CD4-positive, alpha-beta memory T cell (primary cell): ENCODE measurements at regions of chr16 and their contacts with region 1.

Region 1: DNA sequence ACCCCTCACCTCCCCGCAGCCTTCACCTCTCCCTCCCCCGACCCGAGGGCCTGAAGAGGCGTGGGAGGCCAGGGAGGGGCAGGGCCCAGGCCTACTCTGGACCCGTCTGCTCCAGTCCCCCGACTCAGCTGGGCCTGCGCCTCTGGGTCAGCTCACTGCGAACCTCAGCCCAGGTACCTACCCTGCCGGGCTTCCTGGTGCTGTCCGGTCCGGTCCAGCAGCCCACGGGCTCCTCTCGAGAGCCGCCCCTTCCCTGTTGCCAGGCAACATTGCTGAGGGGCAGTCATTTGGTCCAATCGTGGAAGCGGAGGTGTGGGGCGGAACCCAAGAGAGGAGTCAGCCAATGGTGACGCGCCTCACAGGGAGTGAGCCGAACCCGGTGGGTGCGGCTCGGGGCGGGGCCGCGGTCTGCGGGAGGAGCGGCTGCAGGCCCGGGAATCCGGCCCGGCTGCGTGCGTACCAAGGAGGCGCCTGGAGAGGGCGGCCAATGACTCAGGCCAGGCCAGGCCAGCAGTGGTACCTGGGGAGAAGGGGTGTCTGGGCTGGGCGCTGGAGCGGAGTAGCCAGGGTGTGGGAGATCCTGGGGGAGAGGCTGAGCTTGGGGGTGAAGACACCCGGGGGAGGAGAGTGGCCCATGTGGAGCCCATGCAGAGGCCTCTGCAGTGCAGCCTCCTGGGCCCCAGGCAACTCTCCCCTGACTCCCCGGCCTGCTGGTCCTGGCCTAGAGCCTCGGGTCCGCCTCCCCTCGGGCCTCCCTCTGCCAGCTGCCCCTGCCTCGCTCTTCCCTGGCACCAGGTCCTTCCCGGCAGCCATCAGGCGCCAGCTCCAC is at the start of gene MEAK7:
- DNase-seq: peak; percentile 95 to 98 (median 96)
- H3K4me3 ChIP-seq: peak within 1 kb of the TSS; percentile 84 to 85
- H3K4me3 Mint-ChIP-seq: peak within 1 kb of the TSS; percentile 87 to 94 (median 91)
- H3K27ac ChIP-seq: peak within 1 kb of the TSS; percentile 74
- H3K27ac Mint-ChIP-seq: peak within 1 kb of the TSS; percentile 80 to 92 (median 88)
- H3K4me1 ChIP-seq: peaks cover 55% of the 10 kb centered on the region
- H3K4me1 Mint-ChIP-seq: peaks cover 33 to 56% (median 44%) of the 10 kb centered on the region in 4 donors
- H3K27me3 ChIP-seq: no peaks in the 10 kb centered on the region
- H3K27me3 Mint-ChIP-seq: no peaks in the 10 kb centered on the region
- total RNA-seq, gene MEAK7: 13.6 to 16.8 TPM

Region 2: GRCh38 chr16:84084570-84085270 is 419.9 kb before region 1 on chr16:
- CTCF ChIA-PET with region 1: no interaction called
- POLR2A ChIA-PET with region 1: no interaction called
- intact Hi-C with region 1: loop called (anchors 5 kb)
- DNase-seq: peak; percentile 64 to 76 (median 67)
- H3K4me3 ChIP-seq: no peak overlapping the region
- H3K4me3 Mint-ChIP-seq: peak overlapping the region in 4 of 8 donors; percentile 13 to 39 (median 18)
- H3K27ac ChIP-seq: no peak overlapping the region
- H3K27ac Mint-ChIP-seq: peak overlapping the region in 5 of 7 donors; percentile 19 to 64 (median 55)
- H3K4me1 ChIP-seq: peaks cover 29% of the 10 kb centered on the region
- H3K4me1 Mint-ChIP-seq: peaks cover 29 to 52% (median 35%) of the 10 kb centered on the region in 4 donors
- H3K27me3 ChIP-seq: no peaks in the 10 kb centered on the region
- H3K27me3 Mint-ChIP-seq: no peaks in the 10 kb centered on the region

Region 3: GRCh38 chr16:84548971-84549844 is 44.6 kb after region 1 on chr16:
- CTCF ChIA-PET with region 1: interaction called, 9 read pairs
- POLR2A ChIA-PET with region 1: interaction called, 19 read pairs
- intact Hi-C with region 1: no loop called
- DNase-seq: peak; percentile 63 to 74 (median 70)
- H3K4me3 ChIP-seq: peak overlapping the region; percentile 49 to 60
- H3K4me3 Mint-ChIP-seq: peak overlapping the region; percentile 84 to 96 (median 91)
- H3K27ac ChIP-seq: peak overlapping the region; percentile 81
- H3K27ac Mint-ChIP-seq: peak overlapping the region; percentile 91 to 99 (median 97)
- H3K4me1 ChIP-seq: peaks cover 78% of the 10 kb centered on the region
- H3K4me1 Mint-ChIP-seq: peaks cover 51 to 77% (median 63%) of the 10 kb centered on the region in 4 donors
- H3K27me3 ChIP-seq: no peaks in the 10 kb centered on the region
- H3K27me3 Mint-ChIP-seq: no peaks in the 10 kb centered on the region

Region 4: GRCh38 chr16:84607694-84608093 is 103.1 kb after region 1 on chr16:
- CTCF ChIA-PET with region 1: interaction called, 358 read pairs
- POLR2A ChIA-PET with region 1: interaction called, 113 read pairs
- intact Hi-C with region 1: no loop called
- DNase-seq: peak in 4 of 5 donors; percentile 49 to 63 (median 52)
- H3K4me3 ChIP-seq: peak overlapping the region; percentile 18 to 31
- H3K4me3 Mint-ChIP-seq: peak overlapping the region; percentile 64 to 86 (median 76)
- H3K27ac ChIP-seq: peak overlapping the region; percentile 62
- H3K27ac Mint-ChIP-seq: peak overlapping the region; percentile 84 to 99 (median 92)
- H3K4me1 ChIP-seq: peaks cover 98% of the 10 kb centered on the region
- H3K4me1 Mint-ChIP-seq: peaks cover 78 to 97% (median 91%) of the 10 kb centered on the region in 4 donors
- H3K27me3 ChIP-seq: no peaks in the 10 kb centered on the region
- H3K27me3 Mint-ChIP-seq: no peaks in the 10 kb centered on the region

Region 5: GRCh38 chr16:84699712-84700445 is 195.2 kb after region 1 on chr16 and contains the start of gene USP10:
- CTCF ChIA-PET with region 1: interaction called, 9 read pairs
- POLR2A ChIA-PET with region 1: no interaction called
- intact Hi-C with region 1: loop called (anchors 1 kb)
- DNase-seq: peak; percentile 83 to 91 (median 88)
- H3K4me3 ChIP-seq: peak within 1 kb of the TSS; percentile 78 to 86
- H3K4me3 Mint-ChIP-seq: peak within 1 kb of the TSS; percentile 95 to 100 (median 98)
- H3K27ac ChIP-seq: peak within 1 kb of the TSS; percentile 92
- H3K27ac Mint-ChIP-seq: peak within 1 kb of the TSS; percentile 93 to 99 (median 98)
- H3K4me1 ChIP-seq: peaks cover 47% of the 10 kb centered on the region
- H3K4me1 Mint-ChIP-seq: peaks cover 23 to 46% (median 35%) of the 10 kb centered on the region in 4 donors
- H3K27me3 ChIP-seq: no peaks in the 10 kb centered on the region
- H3K27me3 Mint-ChIP-seq: no peaks in the 10 kb centered on the region
- total RNA-seq, gene USP10: 89.0 to 93.2 TPM

Region 6: DNA sequence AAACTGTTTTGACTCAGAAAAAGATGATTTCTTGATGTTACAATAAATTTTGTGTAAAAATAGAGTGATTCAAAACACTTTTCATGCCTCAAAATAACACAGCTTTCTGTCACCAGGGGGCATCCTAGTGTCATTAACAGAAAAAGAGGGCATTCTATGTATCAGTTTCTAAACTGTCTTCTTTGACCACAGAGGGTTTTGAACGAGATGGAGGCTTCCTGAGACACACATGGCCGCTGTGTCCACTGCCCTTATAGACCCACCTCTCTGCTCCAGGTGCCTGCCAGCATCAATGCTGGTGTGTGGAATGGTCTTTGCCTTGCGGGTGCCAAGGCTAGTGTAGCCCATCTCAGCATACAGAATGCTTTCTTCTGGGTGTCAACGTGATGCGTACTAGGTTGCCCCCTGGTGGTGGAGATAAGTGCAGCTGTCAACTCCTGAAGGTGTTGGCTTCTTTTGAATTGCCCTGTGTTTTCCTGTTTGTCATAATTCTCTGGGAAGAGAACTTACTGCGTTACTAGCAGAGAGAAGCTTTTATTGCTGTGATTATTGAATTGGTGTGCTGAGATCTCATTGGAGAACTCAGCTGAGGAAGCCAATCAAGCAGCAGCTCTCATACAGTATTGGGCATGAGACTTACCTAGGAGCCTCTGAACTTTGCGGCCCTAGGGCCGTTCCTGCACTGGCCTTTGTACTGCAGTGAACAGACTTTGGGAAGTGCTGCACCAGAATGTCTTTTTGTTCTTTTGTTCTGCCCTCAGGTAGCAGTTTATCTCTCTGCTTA is 233.8 kb after region 1 on chr16:
- CTCF ChIA-PET with region 1: interaction called, 63 read pairs
- POLR2A ChIA-PET with region 1: no interaction called
- intact Hi-C with region 1: no loop called
- DNase-seq: peak; percentile 75 to 82 (median 78)
- H3K4me3 ChIP-seq: no peak overlapping the region
- H3K4me3 Mint-ChIP-seq: peak overlapping the region; percentile 27 to 80 (median 64)
- H3K27ac ChIP-seq: no peak overlapping the region
- H3K27ac Mint-ChIP-seq: peak overlapping the region; percentile 2 to 87 (median 80)
- H3K4me1 ChIP-seq: peaks cover 33% of the 10 kb centered on the region
- H3K4me1 Mint-ChIP-seq: peaks cover 36 to 53% (median 43%) of the 10 kb centered on the region in 4 donors
- H3K27me3 ChIP-seq: no peaks in the 10 kb centered on the region
- H3K27me3 Mint-ChIP-seq: no peaks in the 10 kb centered on the region